ENCODE measurements at regions of chr5 and their contacts with region 1.

Region 1: GRCh38 chr5:94968507-94969095 is 316.3 kb downstream of the MCTP1 start:
- DNase-seq: peak; percentile 46 to 68
- H3K4me3 ChIP-seq: no peak overlapping the region
- H3K4me3 Mint-ChIP-seq: no peak overlapping the region
- H3K27ac Mint-ChIP-seq: no peak overlapping the region
- H3K4me1 ChIP-seq: no peaks in the 10 kb centered on the region
- H3K4me1 Mint-ChIP-seq: no peaks in the 10 kb centered on the region
- H3K27me3 ChIP-seq: no peaks in the 10 kb centered on the region
- H3K27me3 Mint-ChIP-seq: peaks cover 9% of the 10 kb centered on the region
- CTCF ChIP-seq: peak; percentile 66 to 75

Region 2: DNA sequence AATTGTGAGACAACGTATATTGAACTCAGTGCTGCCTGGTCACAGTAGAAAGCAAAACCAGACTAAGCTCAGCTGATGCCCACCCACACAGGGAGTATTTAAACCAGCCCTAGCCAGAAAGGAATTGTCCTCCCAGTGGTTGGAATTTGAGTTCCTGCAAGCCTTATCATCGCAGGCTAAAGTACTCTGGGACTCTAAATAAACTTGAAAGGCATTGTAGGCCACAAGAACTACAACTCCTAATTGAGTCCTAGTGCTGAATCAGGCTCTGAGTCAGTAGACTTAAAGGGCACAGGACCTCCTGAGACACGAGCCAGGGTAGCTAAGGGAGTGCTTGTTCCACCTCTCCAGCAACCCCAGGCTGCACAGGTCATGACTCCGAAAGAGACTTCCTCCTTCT is 144.9 kb after region 1 on chr5:
- CTCF ChIA-PET with region 1: no interaction called
- POLR2A ChIA-PET with region 1: no interaction called
- intact Hi-C with region 1: loop called (anchors 10 kb)
- DNase-seq: peak; percentile 36 to 39
- H3K4me3 ChIP-seq: no peak overlapping the region
- H3K4me3 Mint-ChIP-seq: no peak overlapping the region
- H3K27ac Mint-ChIP-seq: no peak overlapping the region
- H3K4me1 ChIP-seq: peaks cover 14% of the 10 kb centered on the region
- H3K4me1 Mint-ChIP-seq: no peaks in the 10 kb centered on the region
- H3K27me3 ChIP-seq: no peaks in the 10 kb centered on the region
- H3K27me3 Mint-ChIP-seq: no peaks in the 10 kb centered on the region
- CTCF ChIP-seq: peak in 1 of 2 experiments; percentile 8

Region 3: GRCh38 chr5:95238560-95239325 is 270.1 kb after region 1 on chr5:
- CTCF ChIA-PET with region 1: interaction called, 7 read pairs
- POLR2A ChIA-PET with region 1: no interaction called
- intact Hi-C with region 1: loop called (anchors 1 kb)
- DNase-seq: peak in 1 of 2 experiments; percentile 24
- H3K4me3 ChIP-seq: no peak overlapping the region
- H3K4me3 Mint-ChIP-seq: no peak overlapping the region
- H3K27ac Mint-ChIP-seq: no peak overlapping the region
- H3K4me1 ChIP-seq: peaks cover 26% of the 10 kb centered on the region
- H3K4me1 Mint-ChIP-seq: peaks cover 22% of the 10 kb centered on the region
- H3K27me3 ChIP-seq: no peaks in the 10 kb centered on the region
- H3K27me3 Mint-ChIP-seq: no peaks in the 10 kb centered on the region
- CTCF ChIP-seq: no peak

Region 4: DNA sequence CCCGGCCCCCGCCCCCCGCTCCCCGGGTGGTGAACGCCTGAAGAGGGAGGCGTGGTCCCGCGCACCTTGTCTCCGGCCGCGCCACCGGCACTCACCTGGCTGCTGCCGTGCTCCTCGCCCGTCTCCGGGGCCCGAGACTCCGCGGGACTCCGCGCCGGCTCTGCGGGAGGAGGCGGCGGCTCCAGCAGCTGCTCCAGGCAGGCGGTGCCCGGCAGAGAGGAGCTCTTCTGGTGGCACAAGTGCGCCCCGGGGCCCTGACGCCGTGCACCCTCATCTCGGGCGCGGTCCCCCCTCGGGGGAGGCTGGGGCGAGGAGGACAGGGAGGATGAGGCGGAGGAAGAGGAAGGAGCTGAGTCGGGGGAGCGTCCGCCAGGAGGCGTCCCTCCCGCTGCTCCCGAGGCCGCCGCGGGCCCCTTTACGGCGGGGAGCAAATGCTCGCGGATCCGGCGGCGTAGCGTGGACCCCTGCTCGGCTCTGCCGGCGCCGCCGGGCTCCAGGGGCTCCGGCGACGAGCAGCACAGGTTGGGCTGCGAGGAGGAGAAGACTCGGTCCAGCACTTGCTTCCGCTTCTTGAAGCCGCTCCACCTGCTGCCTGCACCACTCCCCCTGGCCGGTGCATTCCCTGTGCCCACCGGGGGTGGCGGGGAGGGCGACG is 315.3 kb after region 1 on chr5:
- CTCF ChIA-PET with region 1: interaction called, 6 read pairs
- POLR2A ChIA-PET with region 1: no interaction called
- intact Hi-C with region 1: loop called (anchors 1 kb)
- DNase-seq: peak; percentile 56 to 70
- H3K4me3 ChIP-seq: peak overlapping the region; percentile 72
- H3K4me3 Mint-ChIP-seq: peak overlapping the region; percentile 71
- H3K27ac Mint-ChIP-seq: no peak overlapping the region
- H3K4me1 ChIP-seq: no peaks in the 10 kb centered on the region
- H3K4me1 Mint-ChIP-seq: peaks cover 6% of the 10 kb centered on the region
- H3K27me3 ChIP-seq: peaks cover 1% of the 10 kb centered on the region
- H3K27me3 Mint-ChIP-seq: peaks cover 29% of the 10 kb centered on the region
- CTCF ChIP-seq: peak; percentile 43 to 59

Region 5: GRCh38 chr5:95508550-95508949 is 539.9 kb after region 1 on chr5:
- CTCF ChIA-PET with region 1: no interaction called
- POLR2A ChIA-PET with region 1: no interaction called
- intact Hi-C with region 1: loop called (anchors 1 kb)
- DNase-seq: no peak
- H3K4me3 ChIP-seq: no peak overlapping the region
- H3K4me3 Mint-ChIP-seq: no peak overlapping the region
- H3K27ac Mint-ChIP-seq: no peak overlapping the region
- H3K4me1 ChIP-seq: no peaks in the 10 kb centered on the region
- H3K4me1 Mint-ChIP-seq: peaks cover 5% of the 10 kb centered on the region
- H3K27me3 ChIP-seq: no peaks in the 10 kb centered on the region
- H3K27me3 Mint-ChIP-seq: no peaks in the 10 kb centered on the region
- CTCF ChIP-seq: no peak

Measured in Caco-2 (cell line).